Heart right ventricle (tissue), 16 donors: ENCODE measurements at regions of chr14 and their contacts with region 1.

Region 1: GRCh38 chr14:76876076-76876475 is 49.9 kb downstream of the LRRC74A start:
- DNase-seq: peak; percentile 48 to 51
- ATAC-seq: peak; percentile 71 to 92 (median 88)
- H3K4me3 ChIP-seq: no peak overlapping the region
- H3K27ac ChIP-seq: no peak overlapping the region
- H3K4me1 ChIP-seq: no peaks in the 10 kb centered on the region
- H3K27me3 ChIP-seq: no peaks in the 10 kb centered on the region
- CTCF ChIP-seq: peak; percentile 79 to 97 (median 93)

Region 2: GRCh38 chr14:76514613-76515012 is 361.5 kb before region 1 on chr14:
- intact Hi-C with region 1: no loop called
- DNase-seq: no peak
- ATAC-seq: no peak
- H3K4me3 ChIP-seq: no peak overlapping the region
- H3K27ac ChIP-seq: no peak overlapping the region
- H3K4me1 ChIP-seq: peaks cover 0 to 3% (median 0%) of the 10 kb centered on the region in 9 donors
- H3K27me3 ChIP-seq: peaks cover 0 to 6% (median 0%) of the 10 kb centered on the region in 7 donors
- CTCF ChIP-seq: peak in 3 of 9 donors; percentile 5 to 25 (median 21)

Region 3: DNA sequence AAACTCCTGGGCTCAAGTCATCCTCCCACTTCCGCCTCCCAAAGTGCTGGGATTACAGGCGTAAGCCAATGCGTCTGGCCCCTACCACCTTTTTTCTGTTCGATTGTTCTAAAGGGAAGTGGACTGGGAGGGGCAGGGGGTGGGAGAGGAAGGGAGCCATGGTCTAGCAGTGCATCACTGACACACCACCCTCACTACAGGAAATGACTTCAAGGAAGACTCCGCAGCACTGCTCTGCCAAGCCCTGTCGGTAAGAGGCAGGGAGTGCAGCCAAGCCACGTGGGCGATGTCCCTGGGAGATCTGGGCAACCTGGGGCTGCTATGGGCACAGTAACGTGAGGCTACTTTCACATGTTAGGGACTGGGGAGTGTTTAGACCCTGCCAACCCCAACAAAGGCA is 31.9 kb before region 1 on chr14:
- intact Hi-C with region 1: no loop called
- DNase-seq: peak; percentile 68 to 88
- ATAC-seq: peak; percentile 94 to 99 (median 98)
- H3K4me3 ChIP-seq: no peak overlapping the region
- H3K27ac ChIP-seq: peak overlapping the region; percentile 66 to 91 (median 87)
- H3K4me1 ChIP-seq: peaks cover 0 to 32% (median 7%) of the 10 kb centered on the region in 9 donors
- H3K27me3 ChIP-seq: peaks cover 0 to 8% (median 0%) of the 10 kb centered on the region in 7 donors
- CTCF ChIP-seq: peak in 8 of 9 donors; percentile 7 to 46 (median 37)

Region 4: DNA sequence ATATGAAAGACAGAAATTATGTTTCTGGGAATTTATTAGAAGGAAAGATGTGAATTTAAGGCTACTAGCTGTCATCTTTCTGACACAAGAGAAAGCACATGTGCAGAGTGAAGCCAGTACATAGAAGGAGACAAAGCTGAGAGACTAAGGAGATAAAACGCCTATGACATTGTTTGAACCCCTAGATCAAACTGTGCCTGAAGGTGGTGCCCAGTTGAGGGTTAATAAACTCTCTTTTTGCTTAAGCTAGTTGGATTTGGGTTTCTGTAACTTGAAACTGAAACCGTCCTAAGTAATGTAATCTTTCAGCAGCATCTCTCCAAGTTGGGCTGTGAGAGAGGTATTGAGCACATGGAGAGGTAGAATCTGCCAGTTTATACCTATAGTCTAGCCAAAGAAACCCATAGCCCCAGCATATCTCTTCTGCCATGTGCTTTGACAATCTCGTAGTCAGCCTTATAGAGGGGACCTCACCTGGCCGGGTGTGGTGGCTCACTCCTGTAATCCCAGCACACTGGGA is 34.4 kb after region 1 on chr14:
- intact Hi-C with region 1: loop called in 7 of 10 experiments (anchors 5 kb)
- DNase-seq: no peak
- ATAC-seq: no peak
- H3K4me3 ChIP-seq: no peak overlapping the region
- H3K27ac ChIP-seq: no peak overlapping the region
- H3K4me1 ChIP-seq: peaks cover 6 to 25% (median 13%) of the 10 kb centered on the region in 9 donors
- H3K27me3 ChIP-seq: no peaks in the 10 kb centered on the region
- CTCF ChIP-seq: no peak

Region 5: GRCh38 chr14:77076113-77076631 is 200.1 kb after region 1 on chr14:
- intact Hi-C with region 1: loop called in 2 of 10 experiments (anchors 2 kb)
- DNase-seq: peak; percentile 81 to 89
- ATAC-seq: peak; percentile 90 to 96 (median 93)
- H3K4me3 ChIP-seq: peak overlapping the region in 8 of 10 donors; percentile 24 to 42 (median 30)
- H3K27ac ChIP-seq: peak overlapping the region; percentile 79 to 95 (median 92)
- H3K4me1 ChIP-seq: peaks cover 9 to 41% (median 28%) of the 10 kb centered on the region in 9 donors
- H3K27me3 ChIP-seq: no peaks in the 10 kb centered on the region
- CTCF ChIP-seq: no peak

Region 6: DNA sequence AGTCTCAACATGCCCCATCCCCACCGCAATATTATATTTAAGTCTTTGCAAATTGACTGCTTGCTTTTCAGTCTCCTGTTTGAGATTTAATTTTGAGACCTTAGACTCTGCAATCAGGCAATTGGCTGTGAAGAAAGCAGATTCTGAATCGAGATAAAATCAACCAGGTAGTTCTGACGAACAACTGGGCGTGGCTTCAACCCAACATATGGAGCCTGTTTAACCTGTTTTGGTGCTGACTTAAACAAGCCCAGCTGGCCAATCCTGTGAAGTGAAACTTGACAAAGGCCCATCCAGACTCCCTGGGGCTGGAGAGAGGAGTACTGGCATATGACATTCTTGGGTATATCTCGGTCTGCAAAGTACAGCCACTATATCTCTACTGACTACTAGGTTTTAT is 212.1 kb after region 1 on chr14:
- intact Hi-C with region 1: no loop called
- DNase-seq: no peak
- ATAC-seq: no peak
- H3K4me3 ChIP-seq: no peak overlapping the region
- H3K27ac ChIP-seq: no peak overlapping the region
- H3K4me1 ChIP-seq: peaks cover 0 to 13% (median 0%) of the 10 kb centered on the region in 9 donors
- H3K27me3 ChIP-seq: no peaks in the 10 kb centered on the region
- CTCF ChIP-seq: no peak

Region 7: DNA sequence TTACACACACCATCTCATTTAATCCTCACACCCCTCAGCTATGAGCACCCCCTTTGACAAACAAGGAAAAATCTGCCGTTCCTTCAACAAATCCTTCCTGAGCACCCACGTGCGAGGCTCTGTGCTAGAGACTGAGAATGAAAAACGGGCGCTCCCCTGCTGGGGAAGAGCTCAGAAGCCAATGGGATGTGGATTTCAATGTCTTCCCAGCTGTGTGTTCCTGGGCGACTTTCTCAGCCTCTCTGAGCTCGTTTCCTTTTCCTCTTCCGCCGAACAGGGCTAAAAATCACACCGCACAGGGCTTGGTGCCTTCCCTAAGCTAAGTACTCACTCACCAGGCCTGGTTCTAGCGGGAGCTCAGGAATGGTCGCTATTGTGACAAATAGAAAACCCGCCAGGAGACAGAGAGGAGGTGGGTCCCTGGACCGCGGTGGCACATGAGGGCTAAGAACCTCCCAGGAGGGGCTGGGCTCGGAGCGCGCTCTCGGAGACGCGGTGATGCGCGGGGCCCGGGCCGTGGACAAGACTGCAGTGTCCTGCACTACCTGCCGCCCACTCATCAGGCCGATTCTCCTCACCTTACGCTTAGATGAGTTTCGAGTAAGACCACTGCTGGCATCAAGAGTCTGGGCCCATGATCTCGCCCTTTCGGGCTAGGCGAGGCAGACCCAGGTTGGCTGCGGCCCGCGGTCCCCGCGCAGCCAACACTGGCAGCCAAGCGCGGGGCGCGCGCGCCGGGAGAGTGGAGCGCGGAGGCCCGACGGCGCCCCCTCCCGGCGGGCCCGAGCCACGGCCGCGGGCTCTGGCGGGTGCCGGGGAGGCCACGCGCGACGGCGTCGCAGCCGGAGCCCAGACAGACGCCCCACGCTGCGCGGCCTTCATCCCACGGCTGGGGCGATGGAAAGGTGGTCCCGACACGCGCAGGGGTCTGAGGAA is 248.5 kb after region 1 on chr14:
- intact Hi-C with region 1: loop called in 1 of 10 experiments (anchors 10 kb)
- DNase-seq: peak in 1 of 2 donors; percentile 63
- ATAC-seq: peak; percentile 57 to 84 (median 70)
- H3K4me3 ChIP-seq: peak overlapping the region; percentile 25 to 62 (median 56)
- H3K27ac ChIP-seq: peak overlapping the region in 2 of 10 donors; percentile 36 to 46
- H3K4me1 ChIP-seq: peaks cover 14 to 54% (median 36%) of the 10 kb centered on the region in 9 donors
- H3K27me3 ChIP-seq: peaks cover 0 to 30% (median 7%) of the 10 kb centered on the region in 7 donors
- CTCF ChIP-seq: peak; percentile 30 to 83 (median 71)

Region 8: DNA sequence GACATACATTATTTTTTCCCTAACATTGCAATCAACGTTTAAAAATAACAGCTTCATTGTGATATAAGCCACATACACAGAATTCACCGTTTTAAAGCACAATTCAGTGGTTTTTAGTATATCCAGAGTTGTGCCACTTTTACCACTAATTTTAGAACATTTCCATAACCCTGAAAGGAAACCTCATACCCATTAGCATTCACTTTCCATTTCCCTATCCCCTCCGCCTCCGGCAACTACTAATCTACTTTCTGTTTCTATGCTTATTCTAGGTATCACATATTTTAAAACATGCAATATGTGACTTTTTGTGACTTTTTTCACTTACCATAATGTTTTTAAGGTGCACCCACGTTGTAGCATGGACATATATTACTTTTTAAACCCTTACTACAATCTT is 678.1 kb after region 1 on chr14:
- intact Hi-C with region 1: loop called in 1 of 10 experiments (anchors 5 kb)
- DNase-seq: no peak
- ATAC-seq: peak in 2 of 8 donors; percentile 44 to 46
- H3K4me3 ChIP-seq: peak overlapping the region in 1 of 10 donors; percentile 0
- H3K27ac ChIP-seq: peak overlapping the region in 7 of 10 donors; percentile 7 to 68 (median 48)
- H3K4me1 ChIP-seq: peaks cover 0 to 41% (median 11%) of the 10 kb centered on the region in 9 donors
- H3K27me3 ChIP-seq: no peaks in the 10 kb centered on the region
- CTCF ChIP-seq: no peak